ENCODE measurements at regions of chr15 and their contacts with region 1.

Region 1: GRCh38 chr15:34825001-34825400 is 29.7 kb upstream of the ACTC1 start:
- DNase-seq: no peak
- ATAC-seq: no peak

Region 2: GRCh38 chr15:33729653-33730052 is 1095.3 kb before region 1 on chr15:
- intact Hi-C with region 1: loop called (anchors 5 kb)
- DNase-seq: no peak
- ATAC-seq: no peak

Region 3: DNA sequence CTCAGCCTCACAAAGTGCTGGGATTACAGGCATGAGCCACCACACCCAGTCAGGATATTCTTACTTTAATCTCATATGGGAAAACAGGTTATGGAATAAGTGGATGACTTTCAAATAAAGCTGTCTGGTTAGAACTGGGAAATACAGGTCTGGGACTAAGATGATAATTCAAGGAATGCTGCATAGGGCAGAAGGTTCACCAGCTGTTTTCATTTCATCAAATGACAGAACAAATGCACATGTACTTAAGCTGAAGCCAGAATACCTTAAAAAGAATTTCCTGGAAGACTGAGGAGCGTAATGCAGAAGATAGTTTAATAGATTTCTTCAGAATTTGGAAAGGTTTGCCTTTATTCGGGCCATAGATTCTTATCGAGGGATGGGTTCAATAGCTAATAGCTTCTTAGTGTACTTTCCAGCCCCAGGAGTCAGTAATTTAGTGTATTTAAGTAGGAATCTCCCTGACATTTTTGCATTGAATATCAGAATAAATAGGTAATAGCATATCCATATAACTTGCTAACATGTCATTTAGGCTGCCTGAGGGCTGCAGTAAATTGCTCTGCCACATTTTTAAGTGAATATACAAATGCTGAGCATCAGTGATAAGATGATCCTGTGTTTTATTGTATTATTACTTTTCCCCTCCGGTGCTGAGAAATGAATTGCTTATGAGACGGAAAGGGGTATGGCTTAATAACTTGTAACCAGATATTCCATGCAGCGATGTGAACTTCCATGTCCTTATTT is 203.4 kb after region 1 on chr15:
- intact Hi-C with region 1: no loop called
- DNase-seq: no peak
- ATAC-seq: no peak